GM10248 (cell line): ENCODE measurements at regions of chr11 and their contacts with region 1.

Region 1: DNA sequence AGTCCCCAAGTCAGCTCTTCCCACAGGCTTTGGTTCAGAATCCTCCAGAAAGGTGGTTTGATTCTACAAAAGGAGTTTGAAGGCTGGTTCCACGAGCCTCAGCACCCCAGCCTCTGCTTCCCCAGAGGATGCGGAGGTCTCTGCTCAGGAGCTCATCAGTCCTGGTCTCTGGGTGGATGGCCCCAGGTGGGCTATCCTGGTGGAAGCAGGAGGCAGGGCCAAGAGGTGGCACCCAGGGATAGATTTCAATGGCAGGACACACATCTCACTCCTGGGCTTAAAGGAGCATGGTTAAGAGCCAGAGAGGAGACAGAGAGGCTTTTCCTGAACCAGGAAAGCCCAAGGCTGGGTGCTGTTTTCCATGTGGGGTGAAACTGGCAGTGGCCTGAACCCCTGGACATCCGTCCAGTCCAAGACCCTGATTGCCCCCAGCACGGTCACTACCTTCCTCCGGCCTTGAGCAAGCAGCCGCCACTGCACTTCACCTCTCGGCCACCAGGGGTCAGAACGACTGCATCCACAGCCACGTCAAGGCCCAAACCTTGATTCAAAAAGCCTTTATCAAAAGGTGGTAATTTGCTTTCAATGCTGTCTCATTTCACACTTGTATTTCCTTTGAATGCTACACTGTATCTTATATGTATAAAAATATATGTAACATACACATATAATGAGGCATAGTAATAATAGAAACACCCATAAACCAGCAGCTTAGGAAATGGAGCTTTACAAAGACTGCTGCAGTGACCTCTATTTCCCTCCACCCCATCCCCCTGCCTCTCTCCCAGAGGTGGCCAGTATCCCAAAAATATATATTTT is 19.3 kb upstream of the FXYD2 start:
- DNase-seq: peak; percentile 71
- CTCF ChIP-seq: peak; percentile 99

Region 2: DNA sequence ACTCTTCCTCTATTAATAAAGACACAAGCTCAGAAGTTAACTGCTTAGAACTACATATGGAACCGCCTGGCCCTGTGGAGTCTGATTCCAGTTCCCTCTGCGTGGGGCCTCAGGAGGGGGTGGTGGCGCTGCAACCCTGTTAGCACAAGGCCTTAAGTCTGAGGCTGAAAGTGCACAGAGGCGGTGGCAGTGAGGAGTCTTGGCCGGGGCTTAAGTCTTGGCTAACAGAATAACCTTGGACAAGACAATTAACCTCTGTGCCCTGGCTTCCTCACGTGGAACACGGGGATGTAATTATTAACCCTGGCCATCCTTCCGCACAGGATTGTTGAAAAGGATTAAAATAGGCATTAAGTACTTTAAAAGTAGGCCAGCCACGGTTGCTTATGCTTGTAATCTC is 324.7 kb before region 1 on chr11:
- CTCF ChIA-PET with region 1: no interaction called
- POLR2A ChIA-PET with region 1: no interaction called
- DNase-seq: no peak
- CTCF ChIP-seq: no peak

Region 3: DNA sequence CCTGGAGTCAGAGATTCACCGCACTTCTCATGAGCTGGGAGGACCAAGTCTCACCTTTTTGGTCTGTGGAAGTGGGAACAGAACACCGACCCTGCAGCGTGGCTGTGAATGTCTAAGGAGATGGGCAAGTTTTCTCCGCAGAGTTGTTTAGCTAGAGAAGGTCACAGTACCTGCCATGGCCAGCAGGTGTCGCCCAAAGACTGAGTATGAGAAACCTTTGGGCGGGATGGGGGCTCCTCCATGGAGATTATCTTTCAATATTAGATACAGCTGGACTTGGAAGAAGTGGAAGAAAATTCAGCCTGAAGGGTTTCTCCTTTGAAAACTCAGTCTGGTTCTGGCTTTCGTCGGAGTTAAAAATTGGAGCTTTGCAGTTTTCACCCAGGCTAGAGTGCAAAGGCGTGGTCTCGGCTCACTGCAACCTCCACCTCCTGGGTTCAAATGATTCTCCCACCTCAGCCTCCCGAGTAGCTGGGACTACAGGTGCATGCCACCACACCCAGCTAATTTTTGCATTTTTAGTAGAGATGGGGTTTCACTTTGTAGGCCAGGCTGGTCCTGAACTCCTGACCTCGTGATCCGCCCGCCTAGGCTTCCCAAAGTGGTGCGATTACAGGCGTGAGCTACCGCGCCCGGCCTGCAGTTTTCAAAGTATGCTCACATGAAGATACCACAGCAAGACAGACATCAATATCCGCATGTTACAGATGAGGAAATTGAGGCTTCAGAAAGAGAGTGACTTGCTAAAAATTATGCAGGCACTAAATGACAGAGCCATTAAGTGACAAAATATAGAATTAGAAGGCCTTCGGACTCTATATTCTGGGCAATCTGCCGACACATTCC is 36.2 kb before region 1 on chr11:
- CTCF ChIA-PET with region 1: interaction called, 35 read pairs
- POLR2A ChIA-PET with region 1: no interaction called
- DNase-seq: peak; percentile 78
- CTCF ChIP-seq: peak; percentile 87

Region 4: GRCh38 chr11:117817368-117818040 is 26.4 kb before region 1 on chr11:
- CTCF ChIA-PET with region 1: interaction called, 18 read pairs
- POLR2A ChIA-PET with region 1: no interaction called
- DNase-seq: peak; percentile 70
- CTCF ChIP-seq: peak; percentile 96

Region 5: DNA sequence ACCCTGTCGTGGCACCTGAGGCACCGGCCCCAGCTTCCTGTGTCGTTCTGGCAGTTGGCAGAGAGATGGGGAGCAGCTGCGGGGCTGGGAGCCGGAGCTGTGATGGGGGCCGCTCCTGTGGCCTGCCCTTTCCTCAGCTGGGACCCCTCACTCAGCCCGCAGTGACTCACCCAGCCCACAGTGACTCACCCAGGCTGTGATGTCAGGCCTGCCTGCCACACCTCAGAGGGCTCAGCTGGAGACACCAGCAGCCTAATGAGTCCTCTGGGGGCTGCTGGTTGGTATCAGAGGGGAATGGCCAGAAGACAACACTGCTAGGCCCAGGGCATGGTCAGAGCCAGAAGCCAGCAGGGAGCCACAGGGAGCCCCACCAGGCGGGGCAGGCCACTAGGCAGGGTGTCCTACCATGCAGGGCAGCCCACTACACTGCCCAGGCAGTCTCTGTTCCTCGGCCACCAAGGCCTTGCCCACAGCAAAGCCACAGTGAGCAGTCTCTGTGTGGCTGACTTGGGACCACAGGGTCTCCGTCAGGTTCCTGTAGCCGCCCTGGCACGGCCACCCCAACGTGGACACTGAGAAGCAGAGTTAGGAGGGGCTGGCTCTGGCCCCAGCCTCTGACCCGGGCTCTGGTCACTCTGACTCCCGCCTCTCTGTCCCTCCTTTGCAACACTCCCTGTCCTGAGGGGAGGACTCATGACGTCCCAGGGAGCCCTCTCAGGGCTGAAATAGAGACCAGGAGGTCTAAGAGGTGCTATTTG is 15.1 kb before region 1 on chr11:
- CTCF ChIA-PET with region 1: interaction called, 45 read pairs
- POLR2A ChIA-PET with region 1: no interaction called
- DNase-seq: peak; percentile 76
- CTCF ChIP-seq: no peak

Region 6: GRCh38 chr11:117932067-117932370 is 88.1 kb after region 1 on chr11:
- CTCF ChIA-PET with region 1: interaction called, 16 read pairs
- POLR2A ChIA-PET with region 1: no interaction called
- DNase-seq: peak; percentile 75
- CTCF ChIP-seq: no peak